CD8-positive, alpha-beta T cell (primary cell): ENCODE measurements at regions of chr3 and their contacts with region 1.

Region 1: GRCh38 chr3:141105828-141106628 is 54.9 kb downstream of the SPSB4 start:
- DNase-seq: peak; percentile 21 to 81 (median 63)
- ATAC-seq: peak; percentile 49
- H3K4me3 ChIP-seq: no peak overlapping the region
- H3K4me3 Mint-ChIP-seq: no peak overlapping the region
- H3K27ac ChIP-seq: no peak overlapping the region
- H3K27ac Mint-ChIP-seq: no peak overlapping the region
- H3K4me1 ChIP-seq: no peaks in the 10 kb centered on the region
- H3K4me1 Mint-ChIP-seq: no peaks in the 10 kb centered on the region
- H3K27me3 ChIP-seq: no peaks in the 10 kb centered on the region
- H3K27me3 Mint-ChIP-seq: no peaks in the 10 kb centered on the region
- CTCF ChIP-seq: peak; percentile 70

Region 2: GRCh38 chr3:139427283-139427993 is 1678.6 kb before region 1 on chr3:
- CTCF ChIA-PET with region 1: no interaction called
- POLR2A ChIA-PET with region 1: no interaction called
- intact Hi-C with region 1: loop called in 1 of 2 experiments (anchors 5 kb)
- DNase-seq: peak in 2 of 9 experiments; percentile 47 to 58
- ATAC-seq: no peak
- H3K4me3 ChIP-seq: no peak overlapping the region
- H3K4me3 Mint-ChIP-seq: no peak overlapping the region
- H3K27ac ChIP-seq: no peak overlapping the region
- H3K27ac Mint-ChIP-seq: no peak overlapping the region
- H3K4me1 ChIP-seq: no peaks in the 10 kb centered on the region
- H3K4me1 Mint-ChIP-seq: peaks cover 4% of the 10 kb centered on the region
- H3K27me3 ChIP-seq: peaks cover 0 to 2% of the 10 kb centered on the region in 2 experiments
- H3K27me3 Mint-ChIP-seq: no peaks in the 10 kb centered on the region
- CTCF ChIP-seq: peak; percentile 73

Region 3: GRCh38 chr3:140898340-140899180 is 207.5 kb before region 1 on chr3:
- CTCF ChIA-PET with region 1: interaction called, 6 read pairs
- POLR2A ChIA-PET with region 1: no interaction called
- intact Hi-C with region 1: loop called (anchors 1 to 5 kb)
- DNase-seq: peak in 2 of 9 experiments; percentile 45 to 58
- ATAC-seq: peak; percentile 58
- H3K4me3 ChIP-seq: no peak overlapping the region
- H3K4me3 Mint-ChIP-seq: no peak overlapping the region
- H3K27ac ChIP-seq: no peak overlapping the region
- H3K27ac Mint-ChIP-seq: no peak overlapping the region
- H3K4me1 ChIP-seq: no peaks in the 10 kb centered on the region
- H3K4me1 Mint-ChIP-seq: no peaks in the 10 kb centered on the region
- H3K27me3 ChIP-seq: no peaks in the 10 kb centered on the region
- H3K27me3 Mint-ChIP-seq: peaks cover 19% of the 10 kb centered on the region
- CTCF ChIP-seq: peak; percentile 72

Region 4: DNA sequence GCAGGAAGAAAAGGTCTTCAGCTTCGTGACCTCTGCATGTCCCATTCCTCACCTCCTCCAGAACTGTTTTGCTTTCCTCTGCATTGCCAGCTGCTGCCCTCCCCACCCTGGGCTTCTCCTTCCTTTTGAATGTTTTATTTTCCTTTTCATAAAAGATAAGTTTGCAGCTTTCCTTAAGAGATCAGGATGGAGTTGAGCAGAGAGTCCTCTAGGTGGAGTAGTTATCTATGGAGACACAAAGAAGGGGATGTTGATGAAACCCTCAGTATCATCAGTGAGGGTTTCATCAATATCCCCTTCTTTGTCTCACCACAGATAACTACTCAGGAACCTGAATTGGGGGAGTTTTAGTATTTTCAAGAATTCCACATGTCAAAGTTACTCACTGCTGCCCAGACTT is 183.4 kb before region 1 on chr3:
- CTCF ChIA-PET with region 1: interaction called, 10 read pairs
- POLR2A ChIA-PET with region 1: no interaction called
- intact Hi-C with region 1: loop called (anchors 1 kb)
- DNase-seq: peak in 2 of 9 experiments; percentile 26 to 43
- ATAC-seq: peak; percentile 55
- H3K4me3 ChIP-seq: no peak overlapping the region
- H3K4me3 Mint-ChIP-seq: no peak overlapping the region
- H3K27ac ChIP-seq: no peak overlapping the region
- H3K27ac Mint-ChIP-seq: no peak overlapping the region
- H3K4me1 ChIP-seq: no peaks in the 10 kb centered on the region
- H3K4me1 Mint-ChIP-seq: no peaks in the 10 kb centered on the region
- H3K27me3 ChIP-seq: peaks cover 0 to 2% of the 10 kb centered on the region in 2 experiments
- H3K27me3 Mint-ChIP-seq: peaks cover 9% of the 10 kb centered on the region
- CTCF ChIP-seq: peak; percentile 44

Region 5: DNA sequence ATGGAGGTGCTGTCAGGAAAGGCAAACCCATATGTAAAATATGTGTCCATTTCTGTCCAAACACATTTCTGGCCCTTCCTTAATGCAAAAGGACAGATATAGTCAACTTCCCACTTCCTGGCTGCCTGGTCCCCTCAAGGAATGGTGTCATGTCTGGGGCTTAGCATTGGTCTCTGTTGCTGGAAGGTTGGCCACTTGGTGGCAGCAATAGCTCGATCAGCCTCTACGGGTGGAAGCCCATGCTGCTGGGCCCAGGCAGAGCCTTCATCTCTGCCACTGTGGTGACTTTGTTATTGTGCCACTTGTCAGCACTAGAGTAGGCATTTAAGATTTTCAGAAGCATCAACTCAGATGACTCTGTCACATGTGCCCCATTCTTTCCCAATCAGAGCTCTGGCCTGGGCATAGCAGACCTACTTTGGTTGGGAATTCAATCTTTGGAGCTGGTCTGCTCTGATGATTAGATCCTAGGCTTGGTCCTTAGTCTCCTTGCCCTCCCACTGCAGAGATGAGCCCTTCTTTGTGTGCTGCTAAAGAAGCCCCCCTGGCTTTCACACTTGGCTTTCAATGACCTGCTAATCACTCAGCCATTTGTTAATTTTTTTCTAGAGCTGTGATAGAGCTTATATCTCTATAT is 105.9 kb before region 1 on chr3:
- CTCF ChIA-PET with region 1: interaction called, 31 read pairs
- POLR2A ChIA-PET with region 1: no interaction called
- intact Hi-C with region 1: loop called in 1 of 2 experiments (anchors 1 kb)
- DNase-seq: peak in 8 of 9 experiments; percentile 3 to 72 (median 48)
- ATAC-seq: peak; percentile 87
- H3K4me3 ChIP-seq: no peak overlapping the region
- H3K4me3 Mint-ChIP-seq: no peak overlapping the region
- H3K27ac ChIP-seq: no peak overlapping the region
- H3K27ac Mint-ChIP-seq: no peak overlapping the region
- H3K4me1 ChIP-seq: no peaks in the 10 kb centered on the region
- H3K4me1 Mint-ChIP-seq: no peaks in the 10 kb centered on the region
- H3K27me3 ChIP-seq: no peaks in the 10 kb centered on the region
- H3K27me3 Mint-ChIP-seq: no peaks in the 10 kb centered on the region
- CTCF ChIP-seq: peak; percentile 39

Region 6: DNA sequence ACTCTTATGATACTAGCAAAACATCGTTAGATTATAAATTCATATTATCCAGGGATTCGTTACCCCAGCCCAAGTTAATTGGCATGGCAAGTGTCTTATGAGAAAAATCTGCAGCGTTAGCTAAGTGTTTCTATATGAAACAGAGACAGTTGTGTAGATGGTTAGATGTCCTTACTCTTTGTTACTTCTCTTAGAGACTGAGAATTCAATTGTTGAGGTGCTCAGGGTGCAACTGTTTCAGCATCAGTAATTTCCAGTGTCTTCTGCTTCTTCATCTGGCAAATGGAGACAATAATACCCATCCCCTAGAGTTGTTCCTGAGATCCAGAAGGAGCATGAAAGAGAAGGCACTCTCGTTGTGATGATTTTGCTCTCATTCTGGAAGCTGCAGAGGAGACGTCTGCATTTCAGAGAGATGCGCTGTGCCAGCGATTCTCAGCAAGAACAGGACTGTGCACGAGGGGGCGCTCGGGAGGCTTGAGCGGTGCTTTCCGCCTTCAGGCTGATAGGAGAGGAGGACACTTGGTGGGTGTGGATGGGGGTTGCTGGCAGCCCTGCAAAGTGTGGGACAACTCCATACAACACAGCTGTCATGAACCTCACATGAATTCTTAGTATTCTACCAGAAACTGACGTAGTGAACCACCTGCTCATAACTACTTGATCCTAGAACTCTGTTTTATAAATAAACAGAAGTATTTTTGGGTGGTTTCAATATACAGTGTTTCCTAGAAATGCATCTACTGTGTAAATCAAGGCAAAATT is 94.6 kb before region 1 on chr3:
- CTCF ChIA-PET with region 1: interaction called, 11 read pairs
- POLR2A ChIA-PET with region 1: no interaction called
- intact Hi-C with region 1: no loop called
- DNase-seq: peak; percentile 48 to 85 (median 73)
- ATAC-seq: peak; percentile 99
- H3K4me3 ChIP-seq: no peak overlapping the region
- H3K4me3 Mint-ChIP-seq: no peak overlapping the region
- H3K27ac ChIP-seq: no peak overlapping the region
- H3K27ac Mint-ChIP-seq: no peak overlapping the region
- H3K4me1 ChIP-seq: peaks cover 5% of the 10 kb centered on the region
- H3K4me1 Mint-ChIP-seq: peaks cover 5% of the 10 kb centered on the region
- H3K27me3 ChIP-seq: peaks cover 0 to 6% of the 10 kb centered on the region in 2 experiments
- H3K27me3 Mint-ChIP-seq: peaks cover 22% of the 10 kb centered on the region
- CTCF ChIP-seq: peak; percentile 71

Region 7: GRCh38 chr3:141094790-141095545 is 11.1 kb before region 1 on chr3:
- CTCF ChIA-PET with region 1: interaction called, 11 read pairs
- POLR2A ChIA-PET with region 1: no interaction called
- intact Hi-C with region 1: no loop called
- DNase-seq: no peak
- ATAC-seq: no peak
- H3K4me3 ChIP-seq: no peak overlapping the region
- H3K4me3 Mint-ChIP-seq: no peak overlapping the region
- H3K27ac ChIP-seq: no peak overlapping the region
- H3K27ac Mint-ChIP-seq: no peak overlapping the region
- H3K4me1 ChIP-seq: no peaks in the 10 kb centered on the region
- H3K4me1 Mint-ChIP-seq: no peaks in the 10 kb centered on the region
- H3K27me3 ChIP-seq: no peaks in the 10 kb centered on the region
- H3K27me3 Mint-ChIP-seq: no peaks in the 10 kb centered on the region
- CTCF ChIP-seq: no peak